Testis (tissue), 5 donors: ENCODE measurements at regions of chr20 and their contacts with region 1.

Region 1: DNA sequence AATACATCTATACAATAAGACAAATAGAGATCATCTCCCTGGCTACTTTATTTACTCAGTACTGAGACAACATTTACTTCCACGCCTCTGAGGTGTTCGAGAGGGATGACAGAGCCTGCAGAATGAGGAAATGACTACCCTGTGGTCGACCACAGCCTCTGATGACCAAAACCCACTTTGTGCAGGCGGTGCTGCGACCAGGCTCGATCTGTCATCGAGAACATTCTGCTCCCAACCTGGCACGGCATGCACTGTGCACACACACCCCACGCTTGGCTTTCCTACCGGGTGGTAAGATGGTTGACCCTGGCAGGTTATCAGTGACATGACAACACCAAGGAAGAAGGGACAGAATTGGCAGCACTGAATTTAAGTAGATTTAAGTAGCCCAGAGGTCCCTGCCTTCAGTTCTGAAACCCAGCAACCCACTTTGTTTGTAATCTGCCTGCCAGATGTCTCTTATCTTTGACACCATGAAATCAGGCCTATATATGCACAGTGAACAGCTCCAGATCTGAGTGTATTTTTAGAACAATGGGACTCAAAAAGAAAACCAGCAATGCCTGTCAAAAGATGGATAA is 42.6 kb downstream of the TTI1 start:
- DNase-seq: peak; percentile 56
- H3K4me3 ChIP-seq: no peak overlapping the region
- H3K27ac ChIP-seq: no peak overlapping the region
- H3K4me1 ChIP-seq: peaks cover 47% of the 10 kb centered on the region
- H3K27me3 ChIP-seq: no peaks in the 10 kb centered on the region
- CTCF ChIP-seq: no peak
- POLR2A ChIP-seq: no peak

Region 2: GRCh38 chr20:37564388-37565133 is 426.1 kb before region 1 on chr20:
- intact Hi-C with region 1: loop called (anchors 10 kb)
- DNase-seq: peak; percentile 69
- H3K4me3 ChIP-seq: peak overlapping the region; percentile 7 to 25
- H3K27ac ChIP-seq: no peak overlapping the region
- H3K4me1 ChIP-seq: no peaks in the 10 kb centered on the region
- H3K27me3 ChIP-seq: no peaks in the 10 kb centered on the region
- CTCF ChIP-seq: peak; percentile 53 to 90 (median 77)
- POLR2A ChIP-seq: no peak

Region 3: DNA sequence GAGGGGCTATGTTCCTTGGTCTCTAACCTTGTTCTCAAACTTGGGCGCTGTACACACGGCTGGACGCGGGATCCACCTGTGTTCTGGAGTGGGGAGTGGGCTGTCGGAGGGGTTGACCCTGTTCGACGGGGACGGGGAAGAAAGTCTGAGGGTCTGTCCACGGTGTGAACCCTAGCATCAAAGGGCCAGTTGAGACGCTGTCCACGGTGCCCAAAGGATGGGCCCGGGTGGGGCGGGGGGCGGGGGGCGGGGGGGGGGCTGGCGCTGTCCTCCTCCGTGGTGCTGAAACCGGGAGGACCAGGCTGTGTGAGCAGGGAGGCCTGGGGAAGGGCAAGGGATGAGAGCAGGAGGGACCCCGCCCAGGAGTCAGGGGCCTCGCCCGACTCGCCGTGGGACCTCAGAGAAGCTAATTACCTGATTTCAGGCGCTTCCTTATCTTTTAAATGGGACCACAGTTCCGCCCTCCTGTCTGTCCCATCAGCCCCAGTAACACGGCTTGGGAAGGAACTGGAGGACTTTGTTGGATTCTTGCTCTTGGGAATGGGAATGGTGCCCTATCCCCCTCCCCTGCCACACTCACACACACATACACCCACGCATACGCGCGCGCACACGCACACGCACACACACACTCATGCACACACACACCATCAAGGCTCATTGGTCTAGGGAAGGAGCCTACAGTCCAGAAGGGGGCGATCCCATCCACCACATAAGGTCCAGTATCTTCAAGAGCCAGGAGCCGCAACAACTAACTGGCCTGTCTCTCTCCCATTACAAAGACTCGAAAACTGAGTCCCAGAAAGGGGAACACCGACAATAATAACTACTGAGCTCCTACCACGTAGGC is 88.8 kb before region 1 on chr20:
- intact Hi-C with region 1: loop called (anchors 10 kb)
- DNase-seq: peak; percentile 80
- H3K4me3 ChIP-seq: peak overlapping the region in 1 of 2 donors; percentile 62
- H3K27ac ChIP-seq: no peak overlapping the region
- H3K4me1 ChIP-seq: peaks cover 17% of the 10 kb centered on the region
- H3K27me3 ChIP-seq: no peaks in the 10 kb centered on the region
- CTCF ChIP-seq: peak in 2 of 3 experiments; percentile 30 to 48
- POLR2A ChIP-seq: no peak

Region 4: GRCh38 chr20:37914672-37915433 is 75.8 kb before region 1 on chr20:
- intact Hi-C with region 1: no loop called
- DNase-seq: peak; percentile 76
- H3K4me3 ChIP-seq: peak overlapping the region; percentile 8 to 29
- H3K27ac ChIP-seq: peak overlapping the region in 1 of 2 donors; percentile 62
- H3K4me1 ChIP-seq: peaks cover 49% of the 10 kb centered on the region
- H3K27me3 ChIP-seq: no peaks in the 10 kb centered on the region
- CTCF ChIP-seq: no peak
- POLR2A ChIP-seq: no peak

Region 5: DNA sequence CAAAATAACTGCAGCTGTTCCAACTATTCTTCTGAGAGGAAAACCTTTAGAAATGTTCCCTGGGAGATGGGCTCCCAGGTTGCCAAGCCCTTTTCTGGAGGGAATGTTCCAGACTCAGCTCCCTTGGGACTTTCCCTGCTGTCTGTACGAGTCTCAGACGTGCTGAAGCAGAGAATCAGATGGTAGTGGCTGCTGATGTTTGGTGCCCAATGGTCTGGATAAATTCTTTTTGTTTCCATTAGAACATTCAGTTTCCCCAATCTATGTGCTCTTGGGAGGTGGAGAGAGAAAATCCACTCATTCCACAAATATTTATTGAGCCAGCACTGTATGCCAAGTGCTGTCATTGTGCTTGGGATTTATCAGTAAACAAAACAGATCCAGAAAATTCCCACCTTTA is 404.5 kb after region 1 on chr20:
- intact Hi-C with region 1: no loop called
- DNase-seq: peak; percentile 40
- H3K4me3 ChIP-seq: no peak overlapping the region
- H3K27ac ChIP-seq: peak overlapping the region in 1 of 2 donors; percentile 56
- H3K4me1 ChIP-seq: no peaks in the 10 kb centered on the region
- H3K27me3 ChIP-seq: no peaks in the 10 kb centered on the region
- CTCF ChIP-seq: no peak
- POLR2A ChIP-seq: no peak